ENCODE measurements at regions of chr3 and their contacts with region 1.

Region 1: GRCh38 chr3:30193625-30194044 is 412.8 kb upstream of the TGFBR2 start:
- DNase-seq: peak in 2 of 3 donors; percentile 19 to 47
- H3K4me3 ChIP-seq: no peak overlapping the region
- H3K4me3 Mint-ChIP-seq: no peak overlapping the region
- H3K27ac ChIP-seq: no peak overlapping the region
- H3K27ac Mint-ChIP-seq: peak overlapping the region in 1 of 7 donors; percentile 8
- H3K4me1 ChIP-seq: peaks cover 6 to 12% of the 10 kb centered on the region in 2 donors
- H3K4me1 Mint-ChIP-seq: peaks cover 10% of the 10 kb centered on the region
- H3K27me3 ChIP-seq: no peaks in the 10 kb centered on the region
- H3K27me3 Mint-ChIP-seq: peaks cover 0 to 3% (median 0%) of the 10 kb centered on the region in 3 donors
- CTCF ChIP-seq: no peak

Region 2: GRCh38 chr3:29649815-29650547 is 543.7 kb before region 1 on chr3:
- intact Hi-C with region 1: no loop called
- DNase-seq: peak in 2 of 3 donors; percentile 12 to 46
- H3K4me3 ChIP-seq: no peak overlapping the region
- H3K4me3 Mint-ChIP-seq: peak overlapping the region in 1 of 2 donors; percentile 50
- H3K27ac ChIP-seq: no peak overlapping the region
- H3K27ac Mint-ChIP-seq: no peak overlapping the region
- H3K4me1 ChIP-seq: peaks cover 9 to 13% of the 10 kb centered on the region in 2 donors
- H3K4me1 Mint-ChIP-seq: peaks cover 8% of the 10 kb centered on the region
- H3K27me3 ChIP-seq: peaks cover 6 to 69% of the 10 kb centered on the region in 2 donors
- H3K27me3 Mint-ChIP-seq: peaks cover 4 to 18% (median 10%) of the 10 kb centered on the region in 3 donors
- CTCF ChIP-seq: no peak

Region 3: GRCh38 chr3:30042274-30042859 is 151.3 kb before region 1 on chr3:
- intact Hi-C with region 1: loop called in 1 of 2 experiments (anchors 2 kb)
- DNase-seq: peak; percentile 31 to 51 (median 49)
- H3K4me3 ChIP-seq: no peak overlapping the region
- H3K4me3 Mint-ChIP-seq: no peak overlapping the region
- H3K27ac ChIP-seq: no peak overlapping the region
- H3K27ac Mint-ChIP-seq: no peak overlapping the region
- H3K4me1 ChIP-seq: peaks cover 17 to 27% of the 10 kb centered on the region in 2 donors
- H3K4me1 Mint-ChIP-seq: peaks cover 35% of the 10 kb centered on the region
- H3K27me3 ChIP-seq: no peaks in the 10 kb centered on the region
- H3K27me3 Mint-ChIP-seq: peaks cover 0 to 2% (median 0%) of the 10 kb centered on the region in 3 donors
- CTCF ChIP-seq: peak; percentile 75

Region 4: GRCh38 chr3:30156586-30157498 is 36.8 kb before region 1 on chr3:
- intact Hi-C with region 1: no loop called
- DNase-seq: peak in 2 of 3 donors; percentile 7 to 35
- H3K4me3 ChIP-seq: no peak overlapping the region
- H3K4me3 Mint-ChIP-seq: no peak overlapping the region
- H3K27ac ChIP-seq: no peak overlapping the region
- H3K27ac Mint-ChIP-seq: peak overlapping the region in 1 of 7 donors; percentile 13
- H3K4me1 ChIP-seq: peaks cover 11 to 16% of the 10 kb centered on the region in 2 donors
- H3K4me1 Mint-ChIP-seq: peaks cover 27% of the 10 kb centered on the region
- H3K27me3 ChIP-seq: no peaks in the 10 kb centered on the region
- H3K27me3 Mint-ChIP-seq: peaks cover 0 to 2% (median 2%) of the 10 kb centered on the region in 3 donors
- CTCF ChIP-seq: no peak